Activated CD8-positive, alpha-beta T cell treated with anti-CD3 and anti-CD28 coated beads, Interleukin-2, amount 10 ng/mL, durations not matched to agents 7 days and 5 days (primary cell): ENCODE measurements at regions of chr9 and their contacts with region 1.

Region 1: GRCh38 chr9:124040935-124041816 is 29.6 kb downstream of the LHX2 start:
- DNase-seq: peak; percentile 56
- ATAC-seq: peak; percentile 57
- H3K4me3 Mint-ChIP-seq: no peak overlapping the region
- H3K27ac Mint-ChIP-seq: no peak overlapping the region
- H3K4me1 Mint-ChIP-seq: peaks cover 2% of the 10 kb centered on the region
- H3K27me3 Mint-ChIP-seq: peaks cover 44% of the 10 kb centered on the region

Region 2: DNA sequence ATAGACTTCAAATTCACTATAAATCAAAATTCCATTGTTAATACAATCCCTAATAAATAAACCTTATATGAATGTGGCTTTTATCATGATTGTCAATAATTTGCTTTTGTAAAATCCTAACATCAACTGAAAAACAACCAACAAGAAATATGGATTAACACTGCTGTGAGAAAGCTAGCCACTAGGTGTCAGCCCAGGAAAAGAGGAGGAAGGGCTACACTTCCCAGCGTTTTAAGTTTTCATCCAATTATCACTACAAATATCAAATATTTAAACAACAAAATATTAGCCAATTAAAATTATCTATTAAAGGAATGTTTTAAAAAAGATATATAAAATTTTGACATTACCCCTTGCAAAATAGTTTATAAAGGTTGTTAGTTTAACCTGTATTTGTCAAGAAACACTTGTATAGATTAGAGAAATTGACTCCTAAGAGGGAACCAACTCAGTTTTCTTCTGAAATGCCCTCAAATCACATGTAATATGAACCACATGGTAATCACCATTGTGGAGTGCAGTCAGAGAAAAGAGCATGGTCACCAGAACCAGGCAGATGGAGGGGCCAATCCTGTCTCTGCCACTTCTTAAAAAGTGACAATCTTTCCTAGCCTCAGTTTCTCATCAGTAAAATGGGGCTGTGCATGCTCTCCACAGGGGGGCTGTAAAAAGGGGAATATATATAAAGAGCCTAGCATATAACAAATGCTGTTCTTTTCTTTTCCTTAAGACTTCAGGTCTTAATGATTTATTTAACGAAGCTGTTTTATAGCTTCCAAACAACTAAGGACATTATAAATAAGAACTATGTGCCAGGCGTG is 497.0 kb before region 1 on chr9:
- CTCF ChIA-PET with region 1: interaction called, 40 read pairs
- POLR2A ChIA-PET with region 1: no interaction called
- DNase-seq: peak; percentile 46
- ATAC-seq: no peak
- H3K4me3 Mint-ChIP-seq: no peak overlapping the region
- H3K27ac Mint-ChIP-seq: no peak overlapping the region
- H3K4me1 Mint-ChIP-seq: no peaks in the 10 kb centered on the region
- H3K27me3 Mint-ChIP-seq: no peaks in the 10 kb centered on the region

Region 3: DNA sequence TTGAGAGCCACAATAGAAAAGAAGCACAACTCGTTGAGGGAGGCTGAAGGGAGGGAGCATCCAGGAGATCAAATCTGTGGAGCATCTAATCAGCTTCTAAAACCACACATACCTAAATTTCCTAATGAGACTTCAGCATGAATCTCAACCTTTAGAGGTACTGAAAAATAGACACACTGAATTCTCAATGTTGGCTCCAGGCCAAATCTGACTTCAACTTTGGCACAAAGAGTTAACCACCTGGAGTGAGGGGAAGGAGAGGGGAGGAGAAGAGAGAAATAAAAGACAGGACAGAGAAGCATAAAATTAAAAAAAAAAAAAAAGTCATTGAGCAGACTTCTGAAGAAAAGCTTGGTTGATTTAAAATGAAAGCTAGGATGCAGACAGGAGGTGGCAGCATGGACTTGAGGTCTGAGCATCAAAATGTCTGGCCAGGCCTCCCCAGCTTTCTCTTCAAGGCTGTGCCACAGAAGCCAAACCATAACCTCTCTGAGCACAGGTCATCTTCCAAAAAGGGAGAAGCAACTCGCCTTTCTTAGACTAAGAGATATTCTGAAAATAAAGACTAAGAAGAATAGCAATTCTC is 316.9 kb before region 1 on chr9:
- CTCF ChIA-PET with region 1: interaction called, 12 read pairs
- POLR2A ChIA-PET with region 1: no interaction called
- DNase-seq: no peak
- ATAC-seq: no peak
- H3K4me3 Mint-ChIP-seq: no peak overlapping the region
- H3K27ac Mint-ChIP-seq: no peak overlapping the region
- H3K4me1 Mint-ChIP-seq: no peaks in the 10 kb centered on the region
- H3K27me3 Mint-ChIP-seq: no peaks in the 10 kb centered on the region

Region 4: GRCh38 chr9:123960366-123960765 is 80.8 kb before region 1 on chr9:
- CTCF ChIA-PET with region 1: interaction called, 11 read pairs
- POLR2A ChIA-PET with region 1: no interaction called
- DNase-seq: no peak
- ATAC-seq: no peak
- H3K4me3 Mint-ChIP-seq: no peak overlapping the region
- H3K27ac Mint-ChIP-seq: no peak overlapping the region
- H3K4me1 Mint-ChIP-seq: peaks cover 7% of the 10 kb centered on the region
- H3K27me3 Mint-ChIP-seq: peaks cover 29% of the 10 kb centered on the region

Region 5: GRCh38 chr9:124005372-124005771 is 35.8 kb before region 1 on chr9:
- CTCF ChIA-PET with region 1: interaction called, 15 read pairs
- POLR2A ChIA-PET with region 1: no interaction called
- DNase-seq: no peak
- ATAC-seq: no peak
- H3K4me3 Mint-ChIP-seq: no peak overlapping the region
- H3K27ac Mint-ChIP-seq: no peak overlapping the region
- H3K4me1 Mint-ChIP-seq: peaks cover 16% of the 10 kb centered on the region
- H3K27me3 Mint-ChIP-seq: peaks cover 94% of the 10 kb centered on the region

Region 6: GRCh38 chr9:124054582-124055227 is 13.5 kb after region 1 on chr9:
- CTCF ChIA-PET with region 1: interaction called, 10 read pairs
- POLR2A ChIA-PET with region 1: no interaction called
- DNase-seq: no peak
- ATAC-seq: no peak
- H3K4me3 Mint-ChIP-seq: no peak overlapping the region
- H3K27ac Mint-ChIP-seq: no peak overlapping the region
- H3K4me1 Mint-ChIP-seq: peaks cover 5% of the 10 kb centered on the region
- H3K27me3 Mint-ChIP-seq: peaks cover 37% of the 10 kb centered on the region

Region 7: GRCh38 chr9:124098141-124099090 is 57.2 kb after region 1 on chr9:
- CTCF ChIA-PET with region 1: no interaction called
- POLR2A ChIA-PET with region 1: no interaction called
- DNase-seq: no peak
- ATAC-seq: no peak
- H3K4me3 Mint-ChIP-seq: no peak overlapping the region
- H3K27ac Mint-ChIP-seq: no peak overlapping the region
- H3K4me1 Mint-ChIP-seq: peaks cover 11% of the 10 kb centered on the region
- H3K27me3 Mint-ChIP-seq: peaks cover 21% of the 10 kb centered on the region

Region 8: GRCh38 chr9:124291801-124292396 is 250.7 kb after region 1 on chr9:
- CTCF ChIA-PET with region 1: interaction called, 10 read pairs
- POLR2A ChIA-PET with region 1: no interaction called
- DNase-seq: peak; percentile 67
- ATAC-seq: peak; percentile 76
- H3K4me3 Mint-ChIP-seq: peak overlapping the region; percentile 51
- H3K27ac Mint-ChIP-seq: peak overlapping the region; percentile 75
- H3K4me1 Mint-ChIP-seq: peaks cover 79% of the 10 kb centered on the region
- H3K27me3 Mint-ChIP-seq: peaks cover 3% of the 10 kb centered on the region